ENCODE measurements at regions of chr2 and their contacts with region 1.

Region 1: DNA sequence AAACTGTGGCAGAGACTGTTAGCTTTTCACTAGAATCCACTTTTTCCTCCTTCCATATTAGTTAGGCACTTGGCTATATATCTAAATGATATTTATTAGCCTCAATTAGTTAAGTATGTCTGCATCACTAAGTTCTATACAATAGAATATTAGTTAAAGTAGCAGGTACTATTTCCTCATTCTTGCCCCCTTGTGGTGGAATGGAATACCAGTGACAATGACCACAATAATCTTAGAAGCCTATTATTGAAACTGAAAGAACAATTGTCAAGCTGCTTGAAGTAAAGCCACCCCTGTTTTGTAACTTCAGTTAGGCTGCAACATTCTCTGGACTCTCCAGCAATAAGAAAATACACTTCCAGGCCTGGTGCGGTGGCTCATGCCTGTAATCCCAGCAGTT is 476.3 kb upstream of the VWC2L start:
- DNase-seq: peak; percentile 35
- ATAC-seq: peak; percentile 57
- H3K4me3 Mint-ChIP-seq: no peak overlapping the region
- H3K27ac Mint-ChIP-seq: no peak overlapping the region
- H3K4me1 Mint-ChIP-seq: peaks cover 2% of the 10 kb centered on the region
- H3K27me3 Mint-ChIP-seq: no peaks in the 10 kb centered on the region

Region 2: GRCh38 chr2:214103276-214104001 is 168.9 kb after region 1 on chr2:
- CTCF ChIA-PET with region 1: no interaction called
- POLR2A ChIA-PET with region 1: no interaction called
- DNase-seq: no peak
- ATAC-seq: no peak
- H3K4me3 Mint-ChIP-seq: no peak overlapping the region
- H3K27ac Mint-ChIP-seq: no peak overlapping the region
- H3K4me1 Mint-ChIP-seq: no peaks in the 10 kb centered on the region
- H3K27me3 Mint-ChIP-seq: no peaks in the 10 kb centered on the region

Region 3: DNA sequence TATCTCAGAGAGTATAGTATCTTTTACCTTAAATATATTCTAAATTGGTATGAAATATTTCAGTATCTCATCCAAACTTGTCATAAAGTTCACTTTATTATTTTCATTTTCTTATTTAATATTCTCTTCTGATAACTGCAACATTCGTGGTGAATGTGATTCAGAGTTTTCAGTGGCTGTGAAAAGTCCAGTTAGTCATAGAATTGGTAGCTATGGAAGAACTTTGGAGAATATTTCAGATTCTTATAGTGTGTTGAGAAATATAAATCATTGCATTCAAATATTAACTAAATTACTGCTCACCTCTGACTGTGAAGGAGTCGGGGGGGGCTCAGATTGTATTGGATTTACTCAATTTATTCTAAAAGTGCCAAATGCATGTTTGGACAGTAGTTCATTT is 297.7 kb after region 1 on chr2:
- CTCF ChIA-PET with region 1: no interaction called
- POLR2A ChIA-PET with region 1: interaction called, 11 read pairs
- DNase-seq: no peak
- ATAC-seq: no peak
- H3K4me3 Mint-ChIP-seq: no peak overlapping the region
- H3K27ac Mint-ChIP-seq: no peak overlapping the region
- H3K4me1 Mint-ChIP-seq: no peaks in the 10 kb centered on the region
- H3K27me3 Mint-ChIP-seq: no peaks in the 10 kb centered on the region

Measured in activated CD8-positive, alpha-beta T cell treated with anti-CD3 and anti-CD28 coated beads, Interleukin-2, amount 10 ng/mL, durations not matched to agents 7 days and 5 days (primary cell).